ENCODE measurements at regions of chr12 and their contacts with region 1.

Region 1: GRCh38 chr12:108193917-108194316 is 64.8 kb downstream of the WSCD2 start:
- DNase-seq: no peak
- ATAC-seq: peak; percentile 70
- H3K4me3 ChIP-seq: no peak overlapping the region
- H3K27ac ChIP-seq: no peak overlapping the region
- H3K4me1 ChIP-seq: no peaks in the 10 kb centered on the region
- H3K27me3 ChIP-seq: no peaks in the 10 kb centered on the region; a peak in 2 of 4 replicates
- CTCF ChIP-seq: peak; percentile 66 to 72 (median 67)
- EP300 ChIP-seq: no peak
- POLR2A ChIP-seq: no peak
- RAD21 ChIP-seq: peak; percentile 63

Region 2: DNA sequence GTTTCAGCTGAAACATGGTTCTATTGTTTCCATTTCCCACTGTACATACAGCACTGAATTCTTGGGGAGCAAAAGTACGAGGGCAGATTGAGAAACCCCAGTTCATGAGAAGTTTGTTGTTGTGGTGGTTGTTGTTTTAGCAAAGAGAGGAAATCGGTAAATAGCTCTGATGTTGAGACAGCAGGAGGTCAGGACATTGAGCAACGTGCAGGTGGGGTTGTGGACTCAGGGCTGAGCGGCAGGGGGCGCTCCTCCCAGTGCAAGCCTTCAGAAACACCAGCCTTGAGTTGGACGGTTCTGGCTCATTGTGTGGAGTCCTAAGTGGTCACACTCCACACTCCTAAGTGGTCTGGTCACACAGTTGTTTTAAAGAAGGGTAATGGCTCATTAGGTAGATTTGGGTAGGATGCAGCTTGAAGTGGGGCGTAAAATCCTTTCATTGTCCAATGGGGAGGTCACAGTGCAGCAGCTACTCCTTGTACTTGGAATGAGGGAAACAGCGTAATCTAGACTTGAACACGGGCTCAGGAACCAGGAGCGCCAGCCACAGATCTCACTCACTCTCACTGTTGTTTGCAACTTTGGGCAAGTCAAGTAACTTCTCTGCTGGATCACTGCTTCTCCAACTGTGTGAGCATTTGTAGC is 522.8 kb before region 1 on chr12:
- CTCF ChIA-PET with region 1: no interaction called
- POLR2A ChIA-PET with region 1: no interaction called
- RAD21 ChIA-PET with region 1: no interaction called
- SMC1A ChIA-PET with region 1: no interaction called
- in situ Hi-C with region 1: no loop called
- intact Hi-C with region 1: loop called (anchors 10 kb)
- DNase-seq: no peak
- ATAC-seq: peak; percentile 91
- H3K4me3 ChIP-seq: no peak overlapping the region
- H3K27ac ChIP-seq: no peak overlapping the region
- H3K4me1 ChIP-seq: no peaks in the 10 kb centered on the region
- H3K27me3 ChIP-seq: peaks cover 5% of the 10 kb centered on the region in 2 experiments; a peak in 2 of 4 replicates
- CTCF ChIP-seq: peak; percentile 69 to 89 (median 84)
- EP300 ChIP-seq: no peak
- POLR2A ChIP-seq: no peak
- RAD21 ChIP-seq: peak; percentile 10; the same call in 1 of the 2 replicates

Region 3: GRCh38 chr12:107917912-107918800 is 275.8 kb before region 1 on chr12:
- CTCF ChIA-PET with region 1: interaction called, 4 read pairs
- POLR2A ChIA-PET with region 1: no interaction called
- RAD21 ChIA-PET with region 1: no interaction called
- SMC1A ChIA-PET with region 1: interaction called, 4 read pairs
- in situ Hi-C with region 1: no loop called
- intact Hi-C with region 1: loop called (anchors 2 kb)
- DNase-seq: no peak
- ATAC-seq: peak; percentile 85
- H3K4me3 ChIP-seq: no peak overlapping the region
- H3K27ac ChIP-seq: no peak overlapping the region
- H3K4me1 ChIP-seq: no peaks in the 10 kb centered on the region
- H3K27me3 ChIP-seq: no peaks in the 10 kb centered on the region; a peak in 1 of 4 replicates
- CTCF ChIP-seq: peak; percentile 82 to 87 (median 84)
- EP300 ChIP-seq: no peak
- POLR2A ChIP-seq: no peak
- RAD21 ChIP-seq: peak; percentile 90

Region 4: GRCh38 chr12:107992870-107993451 is 201.0 kb before region 1 on chr12:
- CTCF ChIA-PET with region 1: interaction called, 9 read pairs
- POLR2A ChIA-PET with region 1: no interaction called
- RAD21 ChIA-PET with region 1: interaction called, 4 read pairs
- SMC1A ChIA-PET with region 1: interaction called, 12 read pairs
- in situ Hi-C with region 1: no loop called
- intact Hi-C with region 1: loop called (anchors 5 kb)
- DNase-seq: peak; percentile 2
- ATAC-seq: peak; percentile 98
- H3K4me3 ChIP-seq: no peak overlapping the region
- H3K27ac ChIP-seq: no peak overlapping the region
- H3K4me1 ChIP-seq: no peaks in the 10 kb centered on the region
- H3K27me3 ChIP-seq: no peaks in the 10 kb centered on the region
- CTCF ChIP-seq: peak; percentile 52 to 65 (median 63)
- EP300 ChIP-seq: no peak
- POLR2A ChIP-seq: no peak
- RAD21 ChIP-seq: 0 out of 2 replicates have a peak, but pooled peaks have one; percentile 28

Region 5: GRCh38 chr12:108063192-108063591 is 130.7 kb before region 1 on chr12:
- CTCF ChIA-PET with region 1: interaction called, 12 read pairs
- POLR2A ChIA-PET with region 1: no interaction called
- RAD21 ChIA-PET with region 1: no interaction called
- SMC1A ChIA-PET with region 1: no interaction called
- in situ Hi-C with region 1: no loop called
- intact Hi-C with region 1: no loop called
- DNase-seq: no peak
- ATAC-seq: no peak
- H3K4me3 ChIP-seq: no peak overlapping the region
- H3K27ac ChIP-seq: no peak overlapping the region
- H3K4me1 ChIP-seq: no peaks in the 10 kb centered on the region
- H3K27me3 ChIP-seq: peaks cover 0 to 2% of the 10 kb centered on the region in 2 experiments; a peak in 2 of 4 replicates
- CTCF ChIP-seq: peak; percentile 41 to 53 (median 52); a peak in 5 of 6 replicates
- EP300 ChIP-seq: no peak
- POLR2A ChIP-seq: no peak
- RAD21 ChIP-seq: peak; percentile 67

Region 6: DNA sequence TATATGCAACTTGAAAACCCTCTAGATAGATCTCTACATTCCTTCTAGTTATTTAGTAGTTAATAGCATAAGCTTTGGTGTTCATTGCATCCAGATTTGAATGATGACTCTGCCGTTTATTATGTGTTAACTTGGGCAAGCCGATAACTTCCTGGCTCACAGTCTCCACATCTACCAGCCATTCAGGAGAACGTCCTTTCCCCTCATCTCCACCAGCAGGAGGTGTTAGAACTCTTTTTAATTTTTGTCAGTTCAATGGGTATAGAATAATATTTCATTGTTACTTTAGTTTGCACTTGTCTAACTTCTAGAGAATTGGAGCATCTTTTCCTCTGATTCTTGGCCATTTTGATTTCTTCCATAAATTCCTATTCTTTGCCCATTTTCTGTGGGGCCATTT is 94.8 kb before region 1 on chr12:
- CTCF ChIA-PET with region 1: interaction called, 4 read pairs
- POLR2A ChIA-PET with region 1: interaction called, 3 read pairs
- RAD21 ChIA-PET with region 1: no interaction called
- SMC1A ChIA-PET with region 1: no interaction called
- in situ Hi-C with region 1: no loop called
- intact Hi-C with region 1: loop called (anchors 5 kb)
- DNase-seq: no peak
- ATAC-seq: peak; percentile 50; the same call in 2 of the 3 replicates
- H3K4me3 ChIP-seq: no peak overlapping the region
- H3K27ac ChIP-seq: no peak overlapping the region
- H3K4me1 ChIP-seq: no peaks in the 10 kb centered on the region; the same call in 1 of the 2 replicates
- H3K27me3 ChIP-seq: no peaks in the 10 kb centered on the region
- CTCF ChIP-seq: peak; percentile 32 to 37 (median 35); a peak in 4 of 6 replicates
- EP300 ChIP-seq: no peak
- POLR2A ChIP-seq: no peak
- RAD21 ChIP-seq: peak; percentile 59

Region 7: DNA sequence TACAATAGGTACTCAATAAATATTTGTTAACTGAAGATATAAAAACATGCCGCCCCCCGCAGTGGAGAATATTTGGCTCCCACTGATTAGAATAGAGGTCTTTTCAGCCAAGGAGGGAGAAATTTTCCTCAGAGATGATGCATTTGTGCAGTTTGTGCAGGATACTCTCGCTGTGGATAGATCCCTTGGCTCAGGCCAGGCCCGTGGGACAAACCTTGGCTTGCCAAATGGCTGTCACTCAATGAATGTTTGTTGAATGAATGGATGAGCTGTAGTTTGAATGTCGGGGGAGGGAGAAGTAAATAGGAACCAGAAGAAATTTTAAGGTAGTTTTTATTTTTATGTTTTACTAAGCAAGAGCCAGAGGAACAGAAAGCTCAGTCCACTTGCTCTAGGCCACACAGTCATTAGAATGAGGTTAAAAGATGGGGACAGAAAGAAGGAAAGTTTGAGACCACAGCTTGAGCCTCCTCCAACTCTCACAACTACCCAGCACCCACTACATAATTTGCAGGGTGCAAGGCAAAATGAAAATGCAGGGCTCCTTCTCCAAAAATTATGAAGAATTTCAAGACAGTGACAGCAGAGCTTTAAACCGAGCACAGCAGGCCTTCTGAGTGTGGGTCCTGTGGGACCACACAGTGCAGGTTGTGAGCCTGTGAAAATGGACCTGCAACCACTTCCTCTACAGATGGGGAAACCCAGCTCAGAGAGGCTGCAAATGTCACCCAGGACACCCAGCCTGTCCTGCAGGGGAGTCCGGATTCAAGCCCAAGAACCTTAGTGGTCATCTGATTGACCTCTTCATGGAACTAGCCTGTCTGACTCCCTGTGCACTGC is 13.4 kb before region 1 on chr12:
- CTCF ChIA-PET with region 1: interaction called, 18 read pairs
- POLR2A ChIA-PET with region 1: no interaction called
- RAD21 ChIA-PET with region 1: interaction called, 3 read pairs
- SMC1A ChIA-PET with region 1: interaction called, 5 read pairs
- in situ Hi-C with region 1: no loop called
- intact Hi-C with region 1: no loop called
- DNase-seq: peak; percentile 8
- ATAC-seq: peak; percentile 95
- H3K4me3 ChIP-seq: no peak overlapping the region
- H3K27ac ChIP-seq: no peak overlapping the region
- H3K4me1 ChIP-seq: peaks cover 7% of the 10 kb centered on the region
- H3K27me3 ChIP-seq: no peaks in the 10 kb centered on the region
- CTCF ChIP-seq: no peak
- EP300 ChIP-seq: no peak
- POLR2A ChIP-seq: no peak
- RAD21 ChIP-seq: no peak